Activated naive CD4-positive, alpha-beta T cell treated with anti-CD3 and anti-CD28 coated beads for 36 hours (primary cell): ENCODE measurements at regions of chr11 and their contacts with region 1.

Region 1: DNA sequence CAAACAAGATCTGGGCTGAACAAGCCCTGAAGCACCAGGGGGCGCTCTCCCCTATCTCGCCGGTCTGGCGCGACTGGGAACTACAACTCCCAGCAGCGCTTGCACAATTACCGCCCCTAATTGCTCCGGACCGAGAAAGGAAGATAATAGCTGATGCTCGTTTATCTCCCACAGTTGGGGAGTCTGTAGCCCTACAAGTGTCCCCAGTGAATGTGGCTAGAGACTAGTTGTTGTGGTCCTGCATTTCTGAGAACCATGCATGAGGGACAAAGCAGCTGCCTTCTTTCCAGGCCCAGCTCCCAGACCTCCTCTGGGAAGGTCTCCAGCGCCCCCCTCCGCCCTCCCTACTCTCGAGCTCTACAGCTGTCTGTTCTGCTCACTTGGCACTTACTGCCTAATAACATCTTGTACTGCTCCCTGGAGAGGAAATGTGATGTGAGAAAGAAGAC is 34.4 kb downstream of the NRXN2 start:
- DNase-seq: peak; percentile 94
- H3K4me3 Mint-ChIP-seq: peak overlapping the region; percentile 39
- H3K27ac Mint-ChIP-seq: no peak overlapping the region
- H3K4me1 Mint-ChIP-seq: peaks cover 24% of the 10 kb centered on the region
- H3K27me3 Mint-ChIP-seq: peaks cover 11% of the 10 kb centered on the region

Region 2: DNA sequence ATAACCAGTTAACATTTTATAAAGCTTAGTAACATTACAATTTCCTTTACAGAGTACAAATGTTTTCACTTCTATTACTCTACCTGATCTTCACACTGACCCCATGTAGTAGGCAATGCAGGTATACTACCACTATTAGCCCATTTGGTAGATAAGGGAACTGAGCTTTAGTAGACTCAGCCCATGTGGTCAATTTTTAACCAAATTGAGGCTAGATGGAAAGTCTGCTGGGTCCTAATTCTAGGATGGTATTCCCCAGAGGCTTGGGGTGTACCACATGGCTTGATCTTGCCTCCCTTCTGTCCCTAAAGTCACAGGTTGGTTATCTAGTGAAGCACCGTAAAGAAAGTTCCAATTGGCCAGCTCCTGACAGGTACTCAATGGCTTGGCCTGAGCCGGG is 13.8 kb before region 1 on chr11:
- CTCF ChIA-PET with region 1: interaction called, 13 read pairs
- intact Hi-C with region 1: no loop called
- DNase-seq: no peak
- H3K4me3 Mint-ChIP-seq: no peak overlapping the region
- H3K27ac Mint-ChIP-seq: no peak overlapping the region
- H3K4me1 Mint-ChIP-seq: no peaks in the 10 kb centered on the region
- H3K27me3 Mint-ChIP-seq: peaks cover 9% of the 10 kb centered on the region

Region 3: GRCh38 chr11:64703048-64703447 is 14.5 kb after region 1 on chr11:
- CTCF ChIA-PET with region 1: interaction called, 27 read pairs
- intact Hi-C with region 1: no loop called
- DNase-seq: no peak
- H3K4me3 Mint-ChIP-seq: no peak overlapping the region
- H3K27ac Mint-ChIP-seq: no peak overlapping the region
- H3K4me1 Mint-ChIP-seq: no peaks in the 10 kb centered on the region
- H3K27me3 Mint-ChIP-seq: peaks cover 8% of the 10 kb centered on the region

Region 4: GRCh38 chr11:64723117-64723906 is 34.8 kb after region 1 on chr11 and contains the start of gene NRXN2:
- CTCF ChIA-PET with region 1: interaction called, 9 read pairs
- intact Hi-C with region 1: loop called (anchors 1 kb)
- DNase-seq: peak; percentile 91
- H3K4me3 Mint-ChIP-seq: peak within 1 kb of the TSS; percentile 67
- H3K27ac Mint-ChIP-seq: no peak within 1 kb of the TSS
- H3K4me1 Mint-ChIP-seq: peaks cover 7% of the 10 kb centered on the region
- H3K27me3 Mint-ChIP-seq: peaks cover 22% of the 10 kb centered on the region
- total RNA-seq, gene NRXN2: 0.24 to 0.35 TPM

Region 5: GRCh38 chr11:64762674-64763525 is 74.3 kb after region 1 on chr11:
- CTCF ChIA-PET with region 1: interaction called, 13 read pairs
- intact Hi-C with region 1: no loop called
- DNase-seq: peak; percentile 60
- H3K4me3 Mint-ChIP-seq: no peak overlapping the region
- H3K27ac Mint-ChIP-seq: peak overlapping the region; percentile 83
- H3K4me1 Mint-ChIP-seq: peaks cover 75% of the 10 kb centered on the region
- H3K27me3 Mint-ChIP-seq: no peaks in the 10 kb centered on the region